Activated CD4-positive, alpha-beta memory T cell treated with anti-CD3 and anti-CD28 coated beads, Interleukin-2, amount 10 ng/mL, durations not matched to agents 7 days and 5 days (primary cell): ENCODE measurements at regions of chr12 and their contacts with region 1.

Region 1: DNA sequence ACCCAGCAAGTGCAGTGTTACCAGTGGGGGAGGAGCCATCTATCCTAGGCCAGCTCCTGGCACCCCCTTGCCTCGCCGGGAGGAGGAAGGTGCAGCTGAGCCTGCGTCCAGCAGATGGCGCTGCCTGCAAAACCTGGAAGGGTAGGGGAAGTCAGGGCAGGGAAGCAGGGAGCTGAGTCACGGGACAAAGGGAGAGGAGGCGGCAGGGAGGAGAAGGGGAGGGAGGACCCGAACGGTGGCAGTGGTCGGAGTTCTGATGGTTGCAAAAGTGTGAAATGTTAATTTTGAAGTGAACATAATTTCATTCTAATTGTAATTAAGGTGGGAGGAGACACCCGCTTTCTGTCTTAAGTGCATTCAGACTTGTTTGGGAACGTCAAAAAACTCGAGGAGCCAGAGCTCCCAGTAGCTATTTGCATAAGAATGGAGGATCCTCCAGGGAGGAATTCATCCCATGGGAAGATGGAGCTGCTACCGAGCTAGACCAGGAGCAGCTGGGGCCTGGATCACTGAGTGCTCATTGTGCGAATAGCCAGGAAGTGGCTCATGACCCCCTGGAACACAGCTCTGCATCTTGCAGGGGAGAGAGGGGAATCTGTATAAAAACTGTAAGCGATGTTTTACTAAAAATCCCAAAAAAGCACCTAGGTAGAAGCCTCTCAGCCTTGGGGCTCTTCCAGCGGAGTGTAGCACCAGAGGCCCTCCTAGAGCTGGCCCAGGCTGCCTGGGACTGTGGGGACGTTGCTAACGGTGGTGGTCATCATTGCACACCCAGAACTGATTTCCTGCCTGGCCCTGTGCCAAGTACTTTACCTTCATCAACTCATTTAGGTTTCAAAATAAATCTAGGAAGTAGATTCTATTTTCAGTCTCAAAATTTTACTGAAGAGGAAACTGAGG is 59.5 kb downstream of the EMP1 start:
- DNase-seq: peak; percentile 79
- H3K4me3 Mint-ChIP-seq: no peak overlapping the region
- H3K27ac Mint-ChIP-seq: no peak overlapping the region
- H3K4me1 Mint-ChIP-seq: peaks cover 3% of the 10 kb centered on the region
- H3K27me3 Mint-ChIP-seq: peaks cover 10% of the 10 kb centered on the region

Region 2: GRCh38 chr12:13044002-13044905 is 211.8 kb before region 1 on chr12 and contains the start of gene FAM234B:
- CTCF ChIA-PET with region 1: interaction called, 19 read pairs
- POLR2A ChIA-PET with region 1: no interaction called
- DNase-seq: peak; percentile 73
- H3K4me3 Mint-ChIP-seq: peak within 1 kb of the TSS; percentile 78
- H3K27ac Mint-ChIP-seq: no peak within 1 kb of the TSS
- H3K4me1 Mint-ChIP-seq: peaks cover 18% of the 10 kb centered on the region
- H3K27me3 Mint-ChIP-seq: peaks cover 11% of the 10 kb centered on the region
- total RNA-seq, gene FAM234B: 4.5 to 5.2 TPM

Region 3: GRCh38 chr12:13173012-13173932 is 82.8 kb before region 1 on chr12:
- CTCF ChIA-PET with region 1: no interaction called
- POLR2A ChIA-PET with region 1: no interaction called
- DNase-seq: peak; percentile 59
- H3K4me3 Mint-ChIP-seq: no peak overlapping the region
- H3K27ac Mint-ChIP-seq: peak overlapping the region; percentile 21
- H3K4me1 Mint-ChIP-seq: peaks cover 39% of the 10 kb centered on the region
- H3K27me3 Mint-ChIP-seq: peaks cover 54% of the 10 kb centered on the region

Region 4: GRCh38 chr12:13211859-13212664 is 44.0 kb before region 1 on chr12:
- CTCF ChIA-PET with region 1: interaction called, 19 read pairs
- POLR2A ChIA-PET with region 1: no interaction called
- DNase-seq: peak; percentile 76
- H3K4me3 Mint-ChIP-seq: peak overlapping the region; percentile 43
- H3K27ac Mint-ChIP-seq: peak overlapping the region; percentile 47
- H3K4me1 Mint-ChIP-seq: peaks cover 65% of the 10 kb centered on the region
- H3K27me3 Mint-ChIP-seq: no peaks in the 10 kb centered on the region

Region 5: DNA sequence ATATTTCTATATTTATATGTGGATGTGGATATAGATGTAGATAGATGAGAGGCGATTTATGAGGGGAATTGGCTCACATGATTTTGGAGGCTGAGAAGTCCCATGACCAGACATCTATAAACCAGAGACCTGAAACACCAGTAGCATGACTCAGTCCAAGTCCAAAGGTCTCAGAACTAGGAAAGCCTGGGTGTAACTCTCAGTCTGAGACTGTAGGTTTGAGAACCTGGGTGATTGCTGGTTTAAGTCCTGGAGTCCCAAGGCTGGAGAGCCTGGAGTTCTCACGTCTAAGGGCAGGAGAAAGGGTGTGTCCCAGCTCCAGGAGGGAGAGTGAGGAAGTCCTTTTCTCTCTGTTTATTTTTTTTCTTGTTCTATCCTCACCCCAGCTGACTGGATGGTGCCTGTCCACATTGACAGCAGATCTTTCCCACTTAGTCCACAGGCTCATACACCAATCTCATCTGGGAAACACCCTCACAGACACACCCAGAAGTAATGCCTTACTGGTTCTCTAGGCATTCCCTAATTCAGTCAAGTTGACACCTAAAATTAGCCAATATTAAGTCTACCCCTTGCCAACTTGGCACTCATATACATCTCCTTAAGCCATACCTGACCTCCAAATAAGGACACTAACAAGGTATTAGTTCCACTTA is 14.1 kb before region 1 on chr12:
- CTCF ChIA-PET with region 1: interaction called, 17 read pairs
- POLR2A ChIA-PET with region 1: no interaction called
- DNase-seq: no peak
- H3K4me3 Mint-ChIP-seq: no peak overlapping the region
- H3K27ac Mint-ChIP-seq: no peak overlapping the region
- H3K4me1 Mint-ChIP-seq: no peaks in the 10 kb centered on the region
- H3K27me3 Mint-ChIP-seq: peaks cover 37% of the 10 kb centered on the region

Region 6: DNA sequence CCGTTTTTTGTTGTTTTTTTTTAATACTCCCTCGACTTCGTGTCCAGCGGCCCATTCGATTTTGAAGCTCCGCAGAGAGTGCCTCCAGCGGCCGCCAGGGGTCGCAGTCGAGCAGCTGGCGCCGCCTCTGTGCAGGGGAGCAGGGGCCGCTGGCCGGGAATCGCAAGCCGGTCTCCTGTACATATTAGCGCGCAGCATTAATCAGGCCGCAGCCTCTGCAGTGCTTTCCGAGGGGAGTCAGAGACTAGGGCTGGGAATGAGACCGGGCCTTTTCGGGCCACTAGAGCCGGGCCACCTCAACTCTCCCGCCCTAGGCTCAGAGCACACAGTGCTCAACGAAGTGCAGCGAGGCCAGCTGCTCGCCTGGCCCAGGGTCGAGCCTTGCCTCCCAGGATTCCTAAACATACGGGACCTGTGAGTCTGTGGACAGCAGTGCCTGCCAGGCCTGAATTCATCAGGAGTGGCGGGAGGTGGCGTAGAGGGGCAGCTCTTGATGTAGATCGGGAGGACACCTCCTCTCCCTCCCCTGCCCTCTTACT is 22.3 kb after region 1 on chr12:
- CTCF ChIA-PET with region 1: interaction called, 27 read pairs
- POLR2A ChIA-PET with region 1: no interaction called
- DNase-seq: peak; percentile 54
- H3K4me3 Mint-ChIP-seq: no peak overlapping the region
- H3K27ac Mint-ChIP-seq: no peak overlapping the region
- H3K4me1 Mint-ChIP-seq: peaks cover 4% of the 10 kb centered on the region
- H3K27me3 Mint-ChIP-seq: peaks cover 35% of the 10 kb centered on the region

Region 7: DNA sequence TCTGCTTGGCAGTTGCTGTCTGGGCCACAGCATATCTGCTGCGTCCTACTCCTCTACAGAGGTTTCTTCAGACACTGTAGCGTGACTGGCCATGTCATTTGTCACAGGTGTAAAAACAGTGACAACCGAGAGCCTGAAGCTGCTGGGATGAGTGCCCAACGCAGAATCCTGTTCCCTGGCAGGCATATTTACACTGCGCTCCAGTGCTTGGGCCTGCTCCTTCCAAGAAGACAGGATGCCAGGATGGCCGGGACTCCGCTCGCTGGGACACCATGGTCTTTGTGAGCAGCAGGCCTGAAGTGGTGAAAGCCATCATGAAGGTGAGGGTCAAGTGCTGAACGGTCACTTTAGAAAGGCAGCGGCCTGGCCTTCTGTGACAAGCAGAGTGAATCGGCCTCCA is 111.9 kb after region 1 on chr12:
- CTCF ChIA-PET with region 1: no interaction called
- POLR2A ChIA-PET with region 1: no interaction called
- DNase-seq: no peak
- H3K4me3 Mint-ChIP-seq: no peak overlapping the region
- H3K27ac Mint-ChIP-seq: no peak overlapping the region
- H3K4me1 Mint-ChIP-seq: no peaks in the 10 kb centered on the region
- H3K27me3 Mint-ChIP-seq: peaks cover 1% of the 10 kb centered on the region